ENCODE measurements at regions of chr18 and their contacts with region 1.

Region 1: DNA sequence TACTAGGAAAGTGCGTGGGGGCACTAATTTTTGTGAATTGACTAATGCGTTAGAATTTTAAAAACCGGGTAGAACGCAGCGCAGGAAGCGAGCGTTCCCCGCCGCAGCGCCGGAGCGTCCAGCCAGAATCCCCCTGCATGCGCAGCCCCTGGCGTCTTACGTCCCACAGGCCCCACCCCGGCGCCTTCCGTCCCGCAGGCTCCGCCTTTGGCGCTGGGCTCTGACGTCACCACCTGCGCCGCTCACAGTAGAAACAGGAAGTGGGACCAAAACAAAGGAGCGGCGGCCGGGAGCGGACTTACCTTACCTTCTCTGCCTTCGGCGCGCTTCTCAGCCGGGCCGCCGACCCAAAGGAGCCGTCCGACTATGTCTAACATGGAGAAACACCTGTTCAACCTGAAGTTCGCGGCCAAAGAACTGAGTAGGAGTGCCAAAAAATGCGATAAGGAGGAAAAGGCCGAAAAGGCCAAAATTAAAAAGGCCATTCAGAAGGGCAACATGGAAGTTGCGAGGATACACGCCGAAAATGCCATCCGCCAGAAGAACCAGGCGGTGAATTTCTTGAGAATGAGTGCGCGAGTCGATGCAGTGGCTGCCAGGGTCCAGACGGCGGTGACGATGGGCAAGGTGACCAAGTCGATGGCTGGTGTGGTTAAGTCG is at the start of gene CHMP1B:
- DNase-seq: peak; percentile 97 to 100 (median 98)

Region 2: GRCh38 chr18:11733031-11733430 is 118.2 kb before region 1 on chr18:
- intact Hi-C with region 1: loop called (anchors 10 kb)
- DNase-seq: peak; percentile 71 to 97 (median 82)

Region 3: DNA sequence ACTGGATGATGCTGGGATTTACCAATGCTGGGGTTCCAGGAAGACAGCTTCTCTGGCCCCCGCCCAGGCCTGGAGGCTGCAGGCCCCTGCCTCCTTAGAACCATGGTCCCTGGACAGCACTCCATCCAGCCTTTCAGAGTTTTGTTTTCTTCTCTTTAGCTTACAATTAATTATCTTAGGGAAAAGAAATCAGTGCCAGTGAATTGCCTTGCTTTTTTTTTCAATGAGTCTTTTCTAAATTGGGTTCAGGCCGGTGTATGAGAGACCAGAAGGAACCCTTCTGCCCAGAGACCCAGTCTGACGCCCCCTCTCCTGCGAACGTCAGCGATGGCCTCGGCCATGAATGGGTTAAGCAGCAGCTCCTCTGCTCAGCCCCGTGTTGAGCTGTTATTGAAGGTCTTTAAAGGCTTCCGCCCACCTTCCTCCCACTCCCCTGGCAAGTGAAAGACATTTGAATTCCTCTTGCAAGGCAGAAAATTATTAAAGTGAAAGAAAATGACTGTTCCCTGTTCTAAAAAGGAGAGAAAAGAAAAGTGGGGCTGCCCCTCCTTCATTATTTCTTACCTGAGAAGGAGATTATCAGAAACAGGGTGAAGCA is 65.7 kb before region 1 on chr18:
- intact Hi-C with region 1: no loop called
- DNase-seq: peak in 1 of 10 donors; percentile 61

Region 4: GRCh38 chr18:11908182-11909060 is 57.1 kb after region 1 on chr18 and contains the start of gene MPPE1:
- intact Hi-C with region 1: loop called (anchors 2 kb)
- DNase-seq: peak; percentile 76 to 98 (median 88)

Measured in posterior cingulate gyrus (tissue), 11 donors.